G401 (cell line): ENCODE measurements at regions of chr16 and their contacts with region 1.

Region 1: DNA sequence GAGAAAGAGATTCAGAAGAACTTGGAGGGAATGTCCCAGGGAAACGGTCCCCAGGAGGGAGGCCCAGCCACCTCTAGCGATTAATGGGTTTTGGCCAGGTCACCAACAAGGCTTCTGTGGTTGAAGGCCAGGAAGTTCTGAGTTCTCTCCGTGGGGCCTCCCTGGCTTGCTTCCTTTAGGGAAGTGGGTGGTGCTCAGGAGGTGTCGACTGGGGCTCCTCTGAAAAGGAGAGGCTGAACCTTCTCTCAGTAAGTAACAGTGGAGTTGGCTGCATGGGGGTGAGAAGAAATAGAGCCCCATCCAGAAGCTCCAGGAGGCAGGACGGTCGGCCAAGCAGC is 77.1 kb upstream of the GSE1 start:
- DNase-seq: no peak

Region 2: DNA sequence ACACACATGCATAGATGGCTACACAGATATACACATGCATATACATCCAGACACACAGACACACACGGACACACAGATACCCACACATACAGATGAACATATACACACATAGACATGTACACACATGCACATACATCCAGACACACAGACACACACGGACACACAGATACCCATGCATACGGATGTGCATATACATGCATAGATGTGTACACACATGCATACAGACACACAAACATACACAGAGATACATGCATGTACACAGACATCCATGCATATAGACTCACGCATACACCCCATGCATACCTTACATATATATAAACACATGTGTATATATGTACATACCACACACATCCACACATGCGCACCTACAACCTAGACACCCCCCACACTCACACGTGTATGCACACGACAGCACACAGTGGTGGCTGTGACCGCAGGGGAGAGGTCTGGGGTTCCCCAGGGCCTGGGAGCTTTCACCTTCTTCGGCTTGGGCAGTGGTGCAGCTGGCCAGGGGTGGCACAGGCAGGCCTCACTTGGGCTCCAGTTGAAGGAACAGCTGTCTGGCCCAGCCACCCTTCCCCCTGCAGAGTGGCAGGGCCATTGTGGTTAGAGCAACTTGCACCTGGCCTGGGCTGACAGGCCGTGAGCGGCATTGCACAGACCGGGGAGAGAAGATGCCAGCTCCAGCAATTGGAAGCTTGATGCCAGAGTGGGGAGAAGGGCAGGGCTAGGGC is 37.6 kb before region 1 on chr16:
- in situ Hi-C with region 1: loop called (anchors 5 kb)
- DNase-seq: no peak

Region 3: DNA sequence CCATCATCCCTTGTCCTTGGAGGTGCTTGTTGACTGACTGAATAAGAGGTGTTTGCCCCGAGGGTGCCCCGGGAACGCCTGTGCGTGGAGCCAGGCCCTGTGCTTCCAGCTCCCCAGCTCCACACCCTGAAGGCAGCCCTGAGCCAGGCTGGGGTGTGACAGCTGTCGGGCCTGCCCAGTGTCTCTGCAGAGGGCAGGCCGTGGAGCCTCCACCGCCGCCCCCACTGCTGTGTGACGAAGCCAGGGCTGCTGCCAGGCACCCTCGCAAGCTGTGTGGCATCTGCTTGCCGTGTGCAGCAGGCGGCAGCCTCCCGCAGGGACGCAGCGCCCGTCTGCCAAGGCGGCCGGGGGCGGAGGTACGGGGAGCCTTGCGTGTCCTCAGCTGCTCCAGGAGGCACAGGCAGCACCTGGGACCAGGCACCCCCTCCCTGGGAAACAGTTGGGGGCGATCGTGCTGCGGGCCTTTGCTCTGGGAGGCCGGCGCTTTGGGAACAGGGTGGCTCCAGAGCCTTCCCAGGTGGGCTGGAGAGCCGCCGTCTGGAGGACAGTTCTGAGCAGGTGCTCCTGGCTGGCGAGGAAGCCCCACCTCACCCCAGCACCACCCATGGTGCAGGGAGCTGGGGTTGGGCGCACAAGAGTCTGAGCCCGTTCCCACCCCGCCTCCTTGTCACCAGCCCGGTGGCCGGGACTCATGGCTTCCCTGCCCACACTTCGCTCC is 103.7 kb after region 1 on chr16:
- in situ Hi-C with region 1: no loop called
- DNase-seq: no peak